ENCODE measurements at regions of chr2 and their contacts with region 1.

Region 1: GRCh38 chr2:202307690-202308089 is 42.1 kb downstream of the NOP58 start:
- DNase-seq: no peak
- H3K4me3 ChIP-seq: no peak overlapping the region
- H3K27ac ChIP-seq: no peak overlapping the region
- H3K4me1 ChIP-seq: no peaks in the 10 kb centered on the region
- CTCF ChIP-seq: no peak

Region 2: DNA sequence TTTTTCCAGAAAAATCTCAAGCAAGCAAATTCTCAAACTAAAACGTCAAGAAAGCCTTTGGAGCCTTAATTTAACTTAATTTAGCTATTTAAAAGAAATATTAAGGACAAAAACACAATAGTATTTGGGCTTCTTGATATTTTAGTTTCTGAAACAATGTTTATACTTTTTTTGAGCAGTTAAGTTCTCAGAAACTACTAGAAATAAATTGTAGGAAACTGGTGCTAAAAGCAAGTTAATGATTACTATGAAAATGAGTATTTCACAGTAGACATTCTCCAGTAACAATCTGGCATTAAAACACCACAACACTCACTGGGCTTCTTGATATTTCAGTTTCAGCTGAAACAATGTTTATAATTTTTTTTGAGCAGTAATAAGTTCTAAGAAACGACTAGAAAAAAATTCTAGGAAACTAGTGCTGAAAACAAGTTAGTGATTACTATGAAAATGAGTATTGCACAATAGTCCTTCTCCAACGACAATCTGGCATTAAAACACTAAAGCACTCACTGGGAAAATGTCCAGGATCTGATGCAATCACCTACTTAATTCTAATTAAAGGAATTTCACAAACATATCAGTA is 901.5 kb before region 1 on chr2:
- CTCF ChIA-PET with region 1: no interaction called
- POLR2A ChIA-PET with region 1: no interaction called
- intact Hi-C with region 1: no loop called
- DNase-seq: no peak
- H3K4me3 ChIP-seq: no peak overlapping the region
- H3K27ac ChIP-seq: no peak overlapping the region
- H3K4me1 ChIP-seq: no peaks in the 10 kb centered on the region
- CTCF ChIP-seq: no peak

Region 3: DNA sequence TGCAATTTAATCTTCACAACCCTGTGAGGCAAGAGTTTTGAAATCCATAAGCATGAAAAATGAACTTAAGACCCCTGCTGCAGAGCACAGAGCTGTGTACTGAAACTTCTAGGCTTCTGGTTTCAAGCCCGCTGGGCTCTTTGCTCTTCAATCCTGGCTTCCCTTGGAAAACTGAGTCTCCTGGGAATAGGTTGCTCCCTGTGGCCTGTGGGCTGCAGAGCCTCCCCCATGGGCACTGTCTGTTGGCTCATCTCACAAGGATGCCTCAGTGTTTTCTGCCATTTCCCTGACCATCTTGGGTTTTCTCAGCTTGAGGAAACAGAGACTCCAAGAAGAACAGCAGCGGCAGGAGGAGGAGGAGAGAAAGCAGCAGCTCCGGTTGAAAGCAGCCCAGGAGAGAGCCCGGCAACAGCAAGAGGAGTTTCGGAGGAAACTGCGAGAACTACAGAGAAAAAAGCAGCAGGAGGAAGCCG is 113.8 kb before region 1 on chr2:
- CTCF ChIA-PET with region 1: no interaction called
- POLR2A ChIA-PET with region 1: no interaction called
- intact Hi-C with region 1: no loop called
- DNase-seq: no peak
- H3K4me3 ChIP-seq: no peak overlapping the region
- H3K27ac ChIP-seq: no peak overlapping the region
- H3K4me1 ChIP-seq: no peaks in the 10 kb centered on the region
- CTCF ChIP-seq: no peak

Region 4: DNA sequence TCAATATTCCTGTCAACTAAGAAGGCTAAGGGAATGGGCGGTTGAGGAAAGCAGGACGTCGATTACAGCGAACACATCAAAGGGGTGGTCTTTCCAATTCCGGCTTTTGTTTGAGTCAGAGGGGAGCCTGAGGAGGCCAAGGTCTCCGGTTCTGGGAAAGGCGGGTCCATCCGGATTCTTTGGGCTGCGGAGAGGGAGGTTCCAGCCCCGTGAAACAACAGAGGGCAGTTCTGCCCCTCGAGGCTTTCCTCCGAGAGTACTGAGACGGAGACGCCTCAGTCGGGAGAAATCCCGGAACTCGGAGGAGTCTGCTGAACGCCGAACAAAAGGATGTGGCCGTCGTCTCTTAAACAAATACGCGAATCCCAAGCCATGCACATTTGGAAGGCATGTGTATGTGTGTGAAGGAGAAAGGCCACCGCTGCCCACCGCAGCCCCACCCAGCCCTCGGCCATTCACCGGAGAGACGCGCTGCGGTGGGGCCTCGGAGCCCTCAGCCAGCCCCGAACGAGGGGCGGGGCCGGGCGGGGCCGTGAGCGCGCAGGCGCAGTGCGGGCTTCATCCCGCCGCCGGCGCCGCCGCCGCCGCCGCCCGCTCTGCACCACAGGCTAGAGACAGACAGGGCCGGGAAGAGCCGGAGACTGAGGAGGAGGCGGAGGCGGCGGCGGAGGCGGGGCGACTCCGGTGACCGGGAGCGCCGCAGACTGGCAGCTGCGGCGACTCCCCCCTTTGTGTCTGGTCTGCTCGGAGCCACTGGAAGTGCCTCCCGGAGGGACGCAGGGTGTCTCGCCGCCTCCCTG is 68.1 kb after region 1 on chr2 and contains the start of gene BMPR2:
- CTCF ChIA-PET with region 1: no interaction called
- POLR2A ChIA-PET with region 1: no interaction called
- intact Hi-C with region 1: loop called (anchors 5 kb)
- DNase-seq: peak; percentile 84
- H3K4me3 ChIP-seq: peak within 1 kb of the TSS; percentile 91
- H3K27ac ChIP-seq: peak within 1 kb of the TSS; percentile 47
- H3K4me1 ChIP-seq: peaks cover 24% of the 10 kb centered on the region
- CTCF ChIP-seq: no peak
- total RNA-seq, gene BMPR2: 3.2 and 4.3 TPM in 2 replicates

Measured in OCI-LY7 (cell line).